ENCODE measurements at regions of chr2 and their contacts with region 1.

Region 1: GRCh38 chr2:118003396-118003824 is 10.5 kb downstream of the CCDC93 start:
- DNase-seq: peak; percentile 20 to 80
- ATAC-seq: peak; percentile 93 to 99
- H3K4me3 ChIP-seq: no peak overlapping the region
- H3K27ac ChIP-seq: no peak overlapping the region
- H3K4me1 ChIP-seq: no peaks in the 10 kb centered on the region
- CTCF ChIP-seq: peak; percentile 93
- EP300 ChIP-seq: no peak
- POLR2A ChIP-seq: no peak
- RAD21 ChIP-seq: peak; percentile 86 to 90

Region 2: GRCh38 chr2:117801826-117802225 is 201.6 kb before region 1 on chr2:
- CTCF ChIA-PET with region 1: no interaction called
- POLR2A ChIA-PET with region 1: no interaction called
- DNase-seq: no peak
- ATAC-seq: no peak
- H3K4me3 ChIP-seq: no peak overlapping the region
- H3K27ac ChIP-seq: no peak overlapping the region
- H3K4me1 ChIP-seq: no peaks in the 10 kb centered on the region
- CTCF ChIP-seq: no peak
- EP300 ChIP-seq: no peak
- POLR2A ChIP-seq: no peak
- RAD21 ChIP-seq: no peak

Region 3: DNA sequence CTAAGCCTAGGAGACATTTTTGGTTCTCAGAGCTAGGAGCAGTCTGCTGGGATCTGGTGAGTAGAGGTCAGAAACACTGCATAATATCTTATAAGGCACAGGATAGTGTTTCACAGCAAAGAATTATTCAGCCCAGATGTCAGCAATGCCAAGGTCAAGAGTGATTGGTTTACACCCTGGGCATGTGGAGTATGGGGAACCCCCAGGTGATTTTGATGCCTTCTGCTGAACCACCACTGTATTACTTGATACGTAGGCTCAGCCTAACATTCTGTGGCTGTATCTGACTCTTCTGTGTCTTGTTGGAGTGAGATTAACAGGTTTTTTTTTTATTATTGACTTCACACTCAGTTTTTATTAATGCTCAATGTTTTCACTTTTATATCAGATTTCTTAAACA is 183.0 kb before region 1 on chr2:
- CTCF ChIA-PET with region 1: interaction called, 137 read pairs
- POLR2A ChIA-PET with region 1: no interaction called
- DNase-seq: no peak
- ATAC-seq: no peak; a peak in 1 of 6 replicates
- H3K4me3 ChIP-seq: no peak overlapping the region
- H3K27ac ChIP-seq: no peak overlapping the region
- H3K4me1 ChIP-seq: peaks cover 24% of the 10 kb centered on the region; the same call in 2 of the 3 replicates
- CTCF ChIP-seq: no peak
- EP300 ChIP-seq: no peak
- POLR2A ChIP-seq: no peak
- RAD21 ChIP-seq: no peak

Region 4: GRCh38 chr2:117853873-117854272 is 149.5 kb before region 1 on chr2:
- CTCF ChIA-PET with region 1: interaction called, 15 read pairs
- POLR2A ChIA-PET with region 1: no interaction called
- DNase-seq: no peak
- ATAC-seq: no peak
- H3K4me3 ChIP-seq: no peak overlapping the region
- H3K27ac ChIP-seq: 0 out of 6 replicates have a peak overlapping the region, but pooled peaks of 1 of the 2 experiments have one; percentile 7
- H3K4me1 ChIP-seq: peaks cover 22% of the 10 kb centered on the region
- CTCF ChIP-seq: no peak
- EP300 ChIP-seq: no peak
- POLR2A ChIP-seq: no peak
- RAD21 ChIP-seq: no peak

Region 5: GRCh38 chr2:117942551-117942950 is 60.9 kb before region 1 on chr2:
- CTCF ChIA-PET with region 1: interaction called, 32 read pairs
- POLR2A ChIA-PET with region 1: no interaction called
- DNase-seq: no peak
- ATAC-seq: no peak
- H3K4me3 ChIP-seq: no peak overlapping the region
- H3K27ac ChIP-seq: no peak overlapping the region
- H3K4me1 ChIP-seq: 0 out of 3 replicates have a peak, but pooled peaks cover 5% of the 10 kb centered on the region
- CTCF ChIP-seq: no peak
- EP300 ChIP-seq: no peak
- POLR2A ChIP-seq: no peak
- RAD21 ChIP-seq: no peak

Region 6: DNA sequence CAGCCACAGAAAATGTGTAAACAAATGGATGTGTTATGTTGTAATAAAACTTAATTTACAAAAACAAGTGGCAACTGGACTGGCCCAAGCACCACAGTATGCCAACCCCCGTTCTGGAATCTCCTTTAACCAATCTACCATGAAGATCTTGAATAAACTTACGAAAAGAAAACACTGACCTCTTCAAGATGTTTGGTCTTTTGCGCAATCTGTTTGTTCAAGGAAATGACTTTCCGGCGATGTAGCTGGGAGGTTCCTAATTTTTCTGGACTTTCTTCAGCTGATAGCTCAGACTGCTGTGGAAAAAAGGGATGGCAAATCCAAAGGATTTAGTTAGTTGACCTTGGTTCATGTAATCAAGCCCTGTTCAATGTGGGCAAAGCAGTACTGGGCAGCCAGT is 45.2 kb before region 1 on chr2:
- CTCF ChIA-PET with region 1: interaction called, 51 read pairs
- POLR2A ChIA-PET with region 1: no interaction called
- DNase-seq: peak in 1 of 2 experiments; percentile 76
- ATAC-seq: peak; percentile 80 to 88
- H3K4me3 ChIP-seq: no peak overlapping the region
- H3K27ac ChIP-seq: peak overlapping the region in 1 of 2 experiments; percentile 67; a peak in 3 of 6 replicates
- H3K4me1 ChIP-seq: peaks cover 18% of the 10 kb centered on the region
- CTCF ChIP-seq: no peak
- EP300 ChIP-seq: peak; percentile 47 to 68; a peak in 2 of 5 replicates
- POLR2A ChIP-seq: no peak
- RAD21 ChIP-seq: 0 out of 5 replicates have a peak, but pooled peaks of 1 of the 2 experiments have one; percentile 28

Region 7: DNA sequence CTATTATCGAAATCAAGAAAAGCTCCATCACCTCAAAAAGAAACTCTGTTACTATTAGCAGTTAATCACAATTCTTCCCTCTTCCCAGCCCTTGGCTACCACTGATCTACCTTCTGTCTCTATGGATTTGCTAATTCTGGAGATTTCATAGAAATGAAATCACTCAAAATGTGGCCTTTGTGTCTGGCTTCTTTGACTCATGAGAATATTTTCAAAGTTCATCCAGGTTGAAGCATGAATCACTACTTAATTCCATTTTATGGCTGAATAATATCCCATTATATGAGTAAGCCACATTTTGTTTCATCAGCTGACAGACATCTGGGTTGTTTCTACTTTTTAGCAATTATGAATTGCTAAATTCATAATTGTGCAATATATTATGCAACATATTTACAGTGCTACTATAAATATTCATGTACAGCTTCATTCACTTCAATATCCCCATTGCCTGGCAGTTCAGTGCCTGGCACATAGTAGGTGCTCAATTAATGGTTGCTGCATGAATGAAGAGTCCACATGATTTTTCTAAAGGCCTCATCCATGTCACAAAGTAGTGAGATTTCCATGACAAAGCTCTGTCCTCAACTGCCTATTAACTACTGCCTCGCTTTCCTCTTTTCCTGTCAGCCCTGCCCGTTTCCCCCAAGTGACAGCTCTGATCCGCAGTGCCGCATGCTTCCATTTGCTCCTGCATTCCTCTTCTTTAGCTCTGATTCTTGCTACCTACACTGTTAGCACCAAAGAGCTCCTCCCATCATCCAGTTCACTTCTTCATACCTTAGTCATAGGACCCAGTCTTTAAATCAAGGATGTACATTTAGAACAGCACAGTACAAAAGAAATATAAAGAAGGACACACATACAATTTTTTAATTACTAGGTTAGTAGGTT is 22.4 kb before region 1 on chr2:
- CTCF ChIA-PET with region 1: interaction called, 81 read pairs
- POLR2A ChIA-PET with region 1: no interaction called
- DNase-seq: peak in 1 of 2 experiments; percentile 48
- ATAC-seq: peak; percentile 78 to 84
- H3K4me3 ChIP-seq: no peak overlapping the region
- H3K27ac ChIP-seq: peak overlapping the region; percentile 65 to 80
- H3K4me1 ChIP-seq: peaks cover 36% of the 10 kb centered on the region
- CTCF ChIP-seq: no peak
- EP300 ChIP-seq: peak; percentile 45 to 63; a peak in 2 of 5 replicates
- POLR2A ChIP-seq: no peak
- RAD21 ChIP-seq: no peak

Region 8: GRCh38 chr2:118013724-118014491 is 10.5 kb after region 1 on chr2 and contains the start of gene CCDC93:
- CTCF ChIA-PET with region 1: interaction called, 26 read pairs
- POLR2A ChIA-PET with region 1: interaction called, 3 read pairs
- DNase-seq: peak; percentile 79 to 95
- ATAC-seq: peak; percentile 91 to 93
- H3K4me3 ChIP-seq: peak within 1 kb of the TSS; percentile 97
- H3K27ac ChIP-seq: peak within 1 kb of the TSS; percentile 88 to 99
- H3K4me1 ChIP-seq: peaks cover 9% of the 10 kb centered on the region; the same call in 2 of the 3 replicates
- CTCF ChIP-seq: no peak
- EP300 ChIP-seq: no peak
- POLR2A ChIP-seq: peak; percentile 86
- RAD21 ChIP-seq: no peak
- polyA plus RNA-seq, gene CCDC93: 17.8 and 19.7 TPM in 2 replicates

Region 9: GRCh38 chr2:118278046-118278445 is 274.6 kb after region 1 on chr2:
- CTCF ChIA-PET with region 1: no interaction called
- POLR2A ChIA-PET with region 1: no interaction called
- DNase-seq: peak in 1 of 2 experiments; percentile 3
- ATAC-seq: no peak
- H3K4me3 ChIP-seq: no peak overlapping the region
- H3K27ac ChIP-seq: no peak overlapping the region
- H3K4me1 ChIP-seq: no peaks in the 10 kb centered on the region
- CTCF ChIP-seq: no peak
- EP300 ChIP-seq: no peak
- POLR2A ChIP-seq: no peak
- RAD21 ChIP-seq: no peak